ENCODE measurements at regions of chr7 and their contacts with region 1.

Region 1: DNA sequence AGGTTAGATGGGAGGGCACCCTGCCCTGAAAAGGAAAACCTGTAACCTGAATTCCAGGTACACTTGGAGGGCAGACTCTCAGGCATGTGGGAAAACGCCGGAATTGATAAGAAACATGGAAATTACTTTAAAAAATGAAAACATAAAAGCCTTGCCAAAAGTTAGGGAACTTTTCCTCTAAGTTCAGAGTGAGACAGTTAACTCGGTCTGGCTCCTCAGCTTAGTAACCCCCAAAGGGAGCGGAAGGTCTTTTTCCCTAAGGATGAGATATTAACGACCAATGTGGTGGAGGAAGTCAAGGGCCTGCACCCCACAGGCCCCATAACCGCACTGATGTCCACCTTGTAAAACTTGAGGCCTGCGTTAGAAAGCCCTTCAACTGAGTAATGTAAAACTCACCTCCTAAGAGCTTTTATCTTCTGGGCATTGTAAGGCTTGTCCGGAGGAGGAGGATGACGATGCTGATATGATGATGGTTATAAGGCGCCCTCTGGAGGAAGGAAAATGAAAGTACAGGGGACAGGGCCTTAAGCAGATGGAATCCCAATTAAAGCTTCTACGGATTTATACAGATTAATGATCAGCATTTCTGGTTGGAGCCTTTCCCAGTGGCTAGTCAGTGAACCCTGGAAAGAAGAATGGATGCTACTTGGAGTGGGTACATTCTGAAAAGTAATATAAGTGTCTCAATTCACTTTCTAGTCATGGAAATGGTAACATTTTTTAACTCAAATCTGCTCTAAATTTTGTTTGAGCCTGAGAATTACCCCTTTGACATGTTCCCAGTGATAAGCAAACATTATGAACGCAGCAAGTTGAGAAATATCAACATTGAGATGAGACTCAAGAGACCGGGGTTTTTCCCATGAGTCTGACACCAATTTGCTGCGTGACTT is 694 bp downstream of the COL1A2 start:
- DNase-seq: no peak
- ATAC-seq: peak; percentile 91
- H3K4me3 Mint-ChIP-seq: peak overlapping the region; percentile 67
- H3K27ac Mint-ChIP-seq: no peak overlapping the region
- H3K4me1 Mint-ChIP-seq: peaks cover 11% of the 10 kb centered on the region
- H3K27me3 Mint-ChIP-seq: peaks cover 30% of the 10 kb centered on the region
- CTCF ChIP-seq: peak; percentile 75

Region 2: DNA sequence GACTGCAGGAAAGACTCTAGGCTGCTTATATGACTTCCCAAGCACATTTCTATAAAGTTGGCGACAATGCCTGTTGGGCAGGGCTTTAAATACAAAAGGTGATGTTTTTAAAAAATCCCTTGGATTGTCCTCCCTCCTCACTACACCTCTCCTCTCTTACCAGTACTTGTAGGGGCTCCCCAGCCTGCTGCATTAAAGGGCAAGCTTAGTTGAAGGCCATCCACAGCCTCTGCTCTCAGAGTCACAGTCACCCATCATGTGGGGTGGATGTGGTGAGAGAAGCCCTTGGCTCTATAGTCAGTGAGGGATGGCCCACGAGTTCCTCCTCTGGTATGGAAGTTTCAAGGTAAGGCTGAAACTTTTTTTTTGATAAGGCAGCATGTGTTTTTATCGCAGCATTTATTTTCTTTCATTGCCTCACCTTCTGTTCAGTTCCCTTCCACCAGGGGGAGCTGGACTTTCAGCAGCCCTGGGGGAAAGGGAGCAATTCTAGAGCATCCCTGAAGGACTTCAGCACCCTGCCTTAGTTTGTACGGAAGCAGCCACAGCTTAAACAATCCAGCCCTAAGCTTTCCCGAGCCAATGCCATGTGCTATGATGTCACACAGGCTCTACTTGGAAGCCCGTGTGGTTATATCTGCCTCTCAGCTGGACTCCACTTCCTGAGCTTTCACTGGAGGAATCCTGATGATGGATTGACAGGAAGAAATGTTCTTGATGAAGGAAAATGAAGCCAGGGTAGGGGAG is 952.7 kb before region 1 on chr7:
- CTCF ChIA-PET with region 1: interaction called, 14 read pairs
- POLR2A ChIA-PET with region 1: no interaction called
- intact Hi-C with region 1: loop called (anchors 1 kb)
- DNase-seq: no peak
- ATAC-seq: peak; percentile 54
- H3K4me3 Mint-ChIP-seq: no peak overlapping the region
- H3K27ac Mint-ChIP-seq: no peak overlapping the region
- H3K4me1 Mint-ChIP-seq: no peaks in the 10 kb centered on the region
- H3K27me3 Mint-ChIP-seq: peaks cover 6% of the 10 kb centered on the region
- CTCF ChIP-seq: no peak

Region 3: DNA sequence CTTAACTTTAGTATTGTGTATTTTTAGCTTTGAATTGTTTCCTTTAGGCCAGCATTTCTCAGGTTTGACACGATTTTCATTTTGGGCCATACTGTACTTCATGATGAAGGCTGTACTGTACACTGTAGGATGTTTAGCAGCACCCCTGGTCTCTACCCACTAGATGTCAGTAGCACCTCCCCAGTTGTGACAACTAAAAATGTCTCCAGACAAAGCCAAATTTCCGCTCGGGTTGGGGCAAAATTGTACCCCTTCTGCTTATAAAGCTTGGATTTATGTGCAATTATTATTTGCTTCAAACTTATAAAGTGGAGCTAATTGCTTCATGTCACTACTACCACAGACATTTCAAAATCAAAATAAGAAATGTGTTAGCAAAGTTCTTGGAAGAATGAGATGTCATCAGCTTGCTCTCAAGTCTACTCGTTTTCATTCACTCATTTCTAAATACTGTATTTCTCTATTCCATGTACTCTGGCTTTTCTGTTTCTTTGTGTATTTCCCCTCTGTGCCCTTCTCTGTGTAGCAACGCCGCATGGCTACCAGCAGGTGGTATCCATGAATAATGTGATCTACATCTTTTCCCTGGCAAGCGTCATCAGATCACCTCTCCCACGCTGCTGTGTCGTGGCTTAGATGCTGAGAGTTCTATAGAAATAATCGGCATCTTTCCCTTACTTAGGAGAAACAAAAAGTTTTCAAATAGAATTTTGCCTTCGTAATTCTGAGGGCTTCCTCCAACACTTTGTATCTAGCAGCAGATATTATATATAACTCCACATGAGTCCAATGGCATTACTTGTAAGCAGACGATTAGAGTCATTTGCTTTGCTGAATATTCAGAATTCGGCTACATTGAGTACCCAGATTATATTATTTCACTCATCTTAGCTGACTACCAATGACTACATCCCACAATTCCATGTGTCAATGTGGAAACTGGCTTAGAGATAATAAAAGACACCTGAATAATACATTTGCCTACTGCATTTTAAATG is 773.1 kb before region 1 on chr7:
- CTCF ChIA-PET with region 1: no interaction called
- POLR2A ChIA-PET with region 1: no interaction called
- intact Hi-C with region 1: loop called (anchors 1 kb)
- DNase-seq: no peak
- ATAC-seq: no peak
- H3K4me3 Mint-ChIP-seq: no peak overlapping the region
- H3K27ac Mint-ChIP-seq: no peak overlapping the region
- H3K4me1 Mint-ChIP-seq: no peaks in the 10 kb centered on the region
- H3K27me3 Mint-ChIP-seq: peaks cover 1% of the 10 kb centered on the region
- CTCF ChIP-seq: no peak

Region 4: DNA sequence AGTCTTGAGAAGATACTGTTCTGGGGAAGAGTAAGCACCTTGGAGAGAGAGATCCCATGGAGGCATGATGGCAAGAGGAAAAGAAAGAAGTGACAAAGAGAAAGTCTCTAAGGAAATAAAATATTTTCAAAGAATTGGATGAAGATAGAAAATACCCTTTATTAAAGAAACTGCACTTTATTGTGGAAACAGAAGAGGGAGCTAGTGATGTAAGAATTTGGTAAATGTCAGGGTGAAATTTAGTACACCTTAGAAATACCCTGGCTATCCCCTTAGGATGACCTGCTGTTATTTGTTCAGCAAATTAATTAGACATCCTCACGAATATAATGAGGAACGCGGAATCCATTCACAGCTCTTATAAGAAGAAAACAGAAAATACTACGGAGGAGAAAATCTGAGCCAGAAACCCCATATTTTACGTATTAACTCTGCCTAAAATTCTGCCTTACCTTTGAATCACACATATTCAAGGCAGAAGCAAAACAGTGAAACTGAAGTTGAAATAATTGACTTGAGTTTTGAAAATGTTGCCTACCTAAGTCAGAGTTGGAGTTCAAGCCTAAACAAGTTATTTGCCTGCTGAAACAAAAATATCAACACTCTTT is 595.5 kb before region 1 on chr7:
- CTCF ChIA-PET with region 1: interaction called, 19 read pairs
- POLR2A ChIA-PET with region 1: no interaction called
- intact Hi-C with region 1: loop called (anchors 1 kb)
- DNase-seq: no peak
- ATAC-seq: no peak
- H3K4me3 Mint-ChIP-seq: no peak overlapping the region
- H3K27ac Mint-ChIP-seq: no peak overlapping the region
- H3K4me1 Mint-ChIP-seq: no peaks in the 10 kb centered on the region
- H3K27me3 Mint-ChIP-seq: peaks cover 2% of the 10 kb centered on the region
- CTCF ChIP-seq: no peak

Region 5: DNA sequence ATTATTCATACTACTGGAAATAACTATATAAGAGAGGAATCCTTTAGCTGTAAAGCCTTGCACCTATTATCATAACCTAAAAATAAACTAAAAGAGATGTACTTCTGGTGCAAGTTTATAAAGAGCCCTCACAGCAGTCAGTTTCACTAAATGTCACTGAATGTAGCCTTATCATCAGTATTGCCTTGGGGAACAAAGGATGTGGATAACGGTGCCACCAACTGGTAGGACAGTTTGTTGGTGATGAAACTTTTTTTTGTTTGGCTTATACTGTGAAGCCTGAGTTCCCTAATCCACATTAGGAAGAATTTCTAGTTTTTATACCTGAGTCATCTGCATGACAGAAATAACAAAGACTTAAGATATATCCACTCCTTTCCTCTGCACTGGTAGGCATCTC is 118.6 kb before region 1 on chr7:
- CTCF ChIA-PET with region 1: no interaction called
- POLR2A ChIA-PET with region 1: no interaction called
- intact Hi-C with region 1: loop called (anchors 5 kb)
- DNase-seq: no peak
- ATAC-seq: peak; percentile 64
- H3K4me3 Mint-ChIP-seq: no peak overlapping the region
- H3K27ac Mint-ChIP-seq: no peak overlapping the region
- H3K4me1 Mint-ChIP-seq: no peaks in the 10 kb centered on the region
- H3K27me3 Mint-ChIP-seq: peaks cover 10% of the 10 kb centered on the region
- CTCF ChIP-seq: no peak

Region 6: GRCh38 chr7:94350733-94351132 is 44.7 kb before region 1 on chr7:
- CTCF ChIA-PET with region 1: interaction called, 3 read pairs
- POLR2A ChIA-PET with region 1: no interaction called
- intact Hi-C with region 1: loop called (anchors 2 kb)
- DNase-seq: no peak
- ATAC-seq: no peak
- H3K4me3 Mint-ChIP-seq: no peak overlapping the region
- H3K27ac Mint-ChIP-seq: no peak overlapping the region
- H3K4me1 Mint-ChIP-seq: peaks cover 30% of the 10 kb centered on the region
- H3K27me3 Mint-ChIP-seq: peaks cover 13% of the 10 kb centered on the region
- CTCF ChIP-seq: no peak

Measured in activated B cell treated with CpG ODN at 0.5 μM for 24 hours (primary cell).